ENCODE measurements at regions of chr1 and their contacts with region 1.

Region 1: GRCh38 chr1:238485057-238485911 is 594.6 kb upstream of the ZP4 start:
- DNase-seq: no peak
- ATAC-seq: no peak
- H3K4me3 ChIP-seq: no peak overlapping the region
- H3K4me3 Mint-ChIP-seq: no peak overlapping the region
- H3K27ac ChIP-seq: no peak overlapping the region
- H3K27ac Mint-ChIP-seq: no peak overlapping the region
- H3K4me1 ChIP-seq: no peaks in the 10 kb centered on the region
- H3K4me1 Mint-ChIP-seq: no peaks in the 10 kb centered on the region
- H3K27me3 ChIP-seq: no peaks in the 10 kb centered on the region
- H3K27me3 Mint-ChIP-seq: no peaks in the 10 kb centered on the region

Region 2: GRCh38 chr1:238499021-238499420 is 13.7 kb after region 1 on chr1:
- CTCF ChIA-PET with region 1: no interaction called
- POLR2A ChIA-PET with region 1: interaction called in 1 of 2 experiments, 12 read pairs
- DNase-seq: no peak
- ATAC-seq: no peak
- H3K4me3 ChIP-seq: no peak overlapping the region
- H3K4me3 Mint-ChIP-seq: no peak overlapping the region
- H3K27ac ChIP-seq: no peak overlapping the region
- H3K27ac Mint-ChIP-seq: no peak overlapping the region
- H3K4me1 ChIP-seq: no peaks in the 10 kb centered on the region
- H3K4me1 Mint-ChIP-seq: no peaks in the 10 kb centered on the region
- H3K27me3 ChIP-seq: no peaks in the 10 kb centered on the region
- H3K27me3 Mint-ChIP-seq: no peaks in the 10 kb centered on the region

Measured in T-cell (primary cell).